ENCODE measurements at regions of chr2 and their contacts with region 1.

Region 1: GRCh38 chr2:200888704-200889625 is at the starts of genes NIF3L1 and PPIL3:
- DNase-seq: peak; percentile 98
- H3K4me3 Mint-ChIP-seq: peak within 1 kb of the TSS; percentile 89
- H3K27ac Mint-ChIP-seq: peak within 1 kb of the TSS; percentile 99
- H3K4me1 Mint-ChIP-seq: peaks cover 58% of the 10 kb centered on the region
- H3K27me3 Mint-ChIP-seq: no peaks in the 10 kb centered on the region
- total RNA-seq, gene NIF3L1: 28.9 to 30.1 TPM
- total RNA-seq, gene PPIL3: 101 to 102 TPM

Region 2: GRCh38 chr2:200811336-200812121 is 77.4 kb before region 1 on chr2 and contains the start of gene BZW1:
- CTCF ChIA-PET with region 1: interaction called, 3 read pairs
- POLR2A ChIA-PET with region 1: interaction called, 20 read pairs
- DNase-seq: peak; percentile 97
- H3K4me3 Mint-ChIP-seq: peak within 1 kb of the TSS; percentile 99
- H3K27ac Mint-ChIP-seq: peak within 1 kb of the TSS; percentile 97
- H3K4me1 Mint-ChIP-seq: peaks cover 54% of the 10 kb centered on the region
- H3K27me3 Mint-ChIP-seq: no peaks in the 10 kb centered on the region
- total RNA-seq, gene BZW1: 266 to 272 TPM

Region 3: DNA sequence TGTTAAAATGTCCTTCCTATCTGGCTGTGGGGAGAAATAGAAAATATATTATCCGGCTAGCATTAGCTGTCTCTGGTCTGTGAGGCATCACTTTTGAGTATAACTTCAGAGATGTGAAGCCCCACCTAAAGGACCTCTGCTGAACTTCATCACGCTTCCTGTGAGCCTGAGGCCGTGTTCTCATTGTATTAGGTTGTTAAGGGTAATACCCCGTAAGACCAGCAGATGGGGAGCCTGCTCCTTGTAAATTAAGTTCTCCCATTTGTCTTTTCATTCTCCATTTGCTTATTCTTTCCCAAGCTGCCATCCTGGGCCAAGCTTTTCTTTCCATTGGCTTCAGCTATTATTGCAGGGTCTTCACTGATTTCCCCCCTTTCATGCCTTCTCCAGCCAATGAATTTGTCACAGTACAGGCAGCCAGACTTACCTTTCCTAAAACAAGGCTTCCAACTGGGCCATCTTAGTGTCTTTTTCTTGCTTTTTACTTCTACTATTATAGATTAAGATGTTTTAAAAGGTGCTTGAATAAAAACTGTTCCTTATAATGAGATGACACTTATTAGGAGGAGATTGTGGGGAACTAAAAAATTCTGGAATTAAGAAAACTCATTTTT is 12.6 kb after region 1 on chr2:
- CTCF ChIA-PET with region 1: interaction called, 17 read pairs
- POLR2A ChIA-PET with region 1: interaction called, 20 read pairs
- DNase-seq: peak; percentile 81
- H3K4me3 Mint-ChIP-seq: no peak overlapping the region
- H3K27ac Mint-ChIP-seq: peak overlapping the region; percentile 53
- H3K4me1 Mint-ChIP-seq: peaks cover 32% of the 10 kb centered on the region
- H3K27me3 Mint-ChIP-seq: no peaks in the 10 kb centered on the region

Region 4: DNA sequence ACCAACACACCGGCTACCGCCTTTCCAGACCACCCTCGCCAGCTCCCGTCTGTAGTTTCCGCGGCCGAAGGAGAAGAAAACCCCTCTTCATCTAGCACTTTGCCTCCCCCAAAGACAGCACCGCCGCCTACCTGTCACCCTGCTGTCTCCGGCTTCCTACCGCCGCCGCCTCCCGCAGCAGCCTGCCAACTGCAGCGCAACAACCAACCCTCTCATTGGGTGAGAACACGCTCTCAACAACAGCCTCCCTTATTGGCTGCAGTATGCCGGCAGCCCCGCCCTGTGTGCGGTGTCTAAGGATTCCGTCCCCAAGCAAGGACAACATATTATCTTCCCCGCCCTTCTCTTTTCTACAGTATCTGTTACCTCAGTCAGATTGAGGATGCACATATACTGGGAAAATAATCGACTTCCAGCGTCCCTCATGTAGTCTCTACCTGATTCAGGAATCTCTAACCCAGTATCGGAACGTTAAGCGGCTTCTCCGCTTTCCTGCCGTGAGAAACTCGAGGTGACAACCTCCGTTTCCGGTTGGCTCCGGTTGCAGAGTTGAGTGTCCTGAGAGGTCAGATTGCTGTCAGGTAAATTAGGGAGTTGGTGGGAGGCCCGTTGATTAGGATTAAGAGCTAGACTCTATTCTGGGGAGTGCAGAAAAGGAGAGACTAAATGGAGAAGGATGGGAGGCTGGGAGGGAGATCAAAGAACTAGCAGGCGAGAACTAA is 182.7 kb after region 1 on chr2 and contains the starts of genes HYCC2 and NDUFB3:
- CTCF ChIA-PET with region 1: interaction called, 5 read pairs
- POLR2A ChIA-PET with region 1: interaction called, 16 read pairs
- DNase-seq: peak; percentile 95
- H3K4me3 Mint-ChIP-seq: peak within 1 kb of the TSS; percentile 96
- H3K27ac Mint-ChIP-seq: peak within 1 kb of the TSS; percentile 88
- H3K4me1 Mint-ChIP-seq: peaks cover 57% of the 10 kb centered on the region
- H3K27me3 Mint-ChIP-seq: no peaks in the 10 kb centered on the region
- total RNA-seq, gene HYCC2: 27.9 to 31.9 TPM
- total RNA-seq, gene NDUFB3: 133 to 135 TPM

Region 5: GRCh38 chr2:201130524-201131186 is 241.7 kb after region 1 on chr2:
- CTCF ChIA-PET with region 1: no interaction called
- POLR2A ChIA-PET with region 1: interaction called, 13 read pairs
- DNase-seq: peak; percentile 50
- H3K4me3 Mint-ChIP-seq: peak overlapping the region; percentile 83
- H3K27ac Mint-ChIP-seq: peak overlapping the region; percentile 90
- H3K4me1 Mint-ChIP-seq: peaks cover 79% of the 10 kb centered on the region
- H3K27me3 Mint-ChIP-seq: no peaks in the 10 kb centered on the region

Region 6: DNA sequence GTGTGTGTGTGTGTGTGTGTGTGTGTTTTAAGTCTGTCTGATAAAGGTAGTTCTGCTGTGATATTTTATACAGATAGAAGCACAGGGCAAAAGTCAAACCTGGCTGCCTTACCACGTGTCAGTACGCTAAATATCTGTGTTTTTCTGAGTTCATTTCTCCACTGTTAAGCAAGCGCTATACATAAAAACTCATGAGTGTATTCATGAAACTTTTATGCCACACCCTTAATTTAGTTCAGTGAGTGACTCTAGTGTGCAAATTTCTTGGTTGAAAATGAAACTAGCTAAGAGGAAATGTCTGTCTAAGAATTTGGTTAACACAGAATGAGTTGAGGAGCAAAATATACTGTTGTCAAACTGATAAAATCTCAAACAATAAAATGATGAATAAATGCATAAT is 305.1 kb after region 1 on chr2:
- CTCF ChIA-PET with region 1: no interaction called
- POLR2A ChIA-PET with region 1: interaction called, 11 read pairs
- DNase-seq: no peak
- H3K4me3 Mint-ChIP-seq: peak overlapping the region; percentile 54
- H3K27ac Mint-ChIP-seq: peak overlapping the region; percentile 87
- H3K4me1 Mint-ChIP-seq: peaks cover 74% of the 10 kb centered on the region
- H3K27me3 Mint-ChIP-seq: no peaks in the 10 kb centered on the region